Activated naive CD4-positive, alpha-beta T cell treated with anti-CD3 and anti-CD28 coated beads for 36 hours (primary cell): ENCODE measurements at regions of chr22 and their contacts with region 1.

Region 1: DNA sequence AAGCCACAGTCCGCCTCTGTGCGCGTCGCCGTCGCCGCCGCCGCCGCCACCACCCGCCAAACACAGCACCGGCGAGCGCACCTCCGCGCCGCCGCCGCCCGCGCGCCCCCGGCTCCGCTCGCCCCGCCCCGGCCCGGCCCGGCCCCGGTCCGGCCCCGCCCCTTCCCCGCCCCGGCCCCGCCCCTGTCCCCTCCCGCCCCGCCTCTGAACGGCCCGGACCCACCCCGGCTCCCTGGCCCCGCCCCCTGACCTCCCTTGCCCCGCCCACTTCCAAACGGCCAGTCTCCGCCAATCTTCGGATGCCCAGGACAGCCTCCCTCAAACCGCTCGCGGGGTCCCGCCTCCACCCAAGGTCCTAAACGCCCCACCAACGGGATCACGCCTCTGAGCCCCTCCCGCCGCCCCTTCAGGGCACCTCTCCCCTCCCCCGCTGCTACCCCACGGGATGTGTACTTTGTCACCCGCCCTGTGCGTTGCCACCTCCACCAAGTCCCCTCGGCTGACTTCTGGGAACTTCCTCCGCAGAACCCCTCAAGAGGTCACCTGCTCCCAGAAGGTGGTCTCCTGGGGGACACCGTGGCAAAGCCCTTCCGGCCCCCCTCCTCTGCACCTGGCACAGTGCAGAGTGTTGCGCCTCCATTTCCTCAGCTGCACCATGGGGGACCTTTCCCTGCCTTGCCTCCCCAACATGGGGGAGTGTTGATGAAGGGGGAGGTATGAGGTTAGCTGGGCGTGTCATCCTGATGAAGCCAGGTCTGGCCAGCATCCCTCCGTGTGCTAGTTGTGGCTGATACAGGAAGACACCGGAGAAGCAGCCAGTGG is at the start of gene KIAA0930:
- DNase-seq: peak; percentile 82
- H3K4me3 Mint-ChIP-seq: peak within 1 kb of the TSS; percentile 87
- H3K27ac Mint-ChIP-seq: peak within 1 kb of the TSS; percentile 53
- H3K4me1 Mint-ChIP-seq: peaks cover 28% of the 10 kb centered on the region
- H3K27me3 Mint-ChIP-seq: no peaks in the 10 kb centered on the region
- total RNA-seq, gene KIAA0930: 16.6 to 19.5 TPM

Region 2: DNA sequence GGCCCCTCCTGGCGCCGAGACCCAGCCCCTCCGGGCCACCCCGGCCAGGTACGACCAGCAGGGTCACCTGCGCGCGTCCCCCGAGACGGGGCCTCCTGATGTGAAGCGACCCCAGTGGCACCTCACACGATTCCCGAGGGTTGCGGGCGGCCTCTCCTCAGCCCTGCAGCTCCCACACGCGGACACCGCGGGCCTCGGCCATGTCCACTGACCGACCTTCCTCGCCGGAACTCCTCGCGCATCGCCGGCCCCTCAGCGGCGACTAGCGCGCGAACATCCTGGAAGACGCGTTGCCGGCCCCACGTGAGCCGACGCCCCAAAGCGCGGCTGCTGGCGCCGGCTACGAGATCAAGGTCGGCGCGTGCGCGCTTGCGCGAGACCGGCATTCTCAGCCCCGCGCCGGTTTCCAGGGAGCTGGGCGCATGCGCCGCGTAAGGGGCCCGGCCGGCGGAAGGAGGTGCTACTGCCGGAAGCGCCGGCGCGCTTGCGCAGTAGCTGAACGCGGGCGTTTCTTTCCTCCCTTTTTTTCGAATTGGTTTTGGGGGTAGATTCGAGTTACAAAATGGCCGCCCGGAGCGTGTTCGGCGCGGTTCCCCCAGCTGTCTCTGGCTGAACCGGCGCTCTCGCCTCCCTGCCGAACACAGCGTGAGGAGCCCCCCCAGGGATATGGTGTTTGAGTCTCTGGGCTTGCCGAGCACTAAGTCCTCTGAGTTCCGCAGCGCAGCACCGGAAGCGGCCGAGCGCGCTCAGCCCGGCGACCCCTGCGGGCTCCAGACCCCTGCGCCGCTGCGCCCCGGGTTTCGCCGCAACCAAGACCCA is 77.4 kb before region 1 on chr22 and contains the start of gene NUP50:
- CTCF ChIA-PET with region 1: no interaction called
- intact Hi-C with region 1: loop called (anchors 2 kb)
- DNase-seq: peak; percentile 95
- H3K4me3 Mint-ChIP-seq: peak within 1 kb of the TSS; percentile 84
- H3K27ac Mint-ChIP-seq: peak within 1 kb of the TSS; percentile 96
- H3K4me1 Mint-ChIP-seq: peaks cover 61% of the 10 kb centered on the region
- H3K27me3 Mint-ChIP-seq: no peaks in the 10 kb centered on the region
- total RNA-seq, gene NUP50: 151 to 154 TPM

Region 3: GRCh38 chr22:45254789-45255278 is 13.8 kb after region 1 on chr22:
- CTCF ChIA-PET with region 1: no interaction called
- intact Hi-C with region 1: no loop called
- DNase-seq: peak; percentile 37
- H3K4me3 Mint-ChIP-seq: no peak overlapping the region
- H3K27ac Mint-ChIP-seq: no peak overlapping the region
- H3K4me1 Mint-ChIP-seq: peaks cover 7% of the 10 kb centered on the region
- H3K27me3 Mint-ChIP-seq: no peaks in the 10 kb centered on the region

Region 4: DNA sequence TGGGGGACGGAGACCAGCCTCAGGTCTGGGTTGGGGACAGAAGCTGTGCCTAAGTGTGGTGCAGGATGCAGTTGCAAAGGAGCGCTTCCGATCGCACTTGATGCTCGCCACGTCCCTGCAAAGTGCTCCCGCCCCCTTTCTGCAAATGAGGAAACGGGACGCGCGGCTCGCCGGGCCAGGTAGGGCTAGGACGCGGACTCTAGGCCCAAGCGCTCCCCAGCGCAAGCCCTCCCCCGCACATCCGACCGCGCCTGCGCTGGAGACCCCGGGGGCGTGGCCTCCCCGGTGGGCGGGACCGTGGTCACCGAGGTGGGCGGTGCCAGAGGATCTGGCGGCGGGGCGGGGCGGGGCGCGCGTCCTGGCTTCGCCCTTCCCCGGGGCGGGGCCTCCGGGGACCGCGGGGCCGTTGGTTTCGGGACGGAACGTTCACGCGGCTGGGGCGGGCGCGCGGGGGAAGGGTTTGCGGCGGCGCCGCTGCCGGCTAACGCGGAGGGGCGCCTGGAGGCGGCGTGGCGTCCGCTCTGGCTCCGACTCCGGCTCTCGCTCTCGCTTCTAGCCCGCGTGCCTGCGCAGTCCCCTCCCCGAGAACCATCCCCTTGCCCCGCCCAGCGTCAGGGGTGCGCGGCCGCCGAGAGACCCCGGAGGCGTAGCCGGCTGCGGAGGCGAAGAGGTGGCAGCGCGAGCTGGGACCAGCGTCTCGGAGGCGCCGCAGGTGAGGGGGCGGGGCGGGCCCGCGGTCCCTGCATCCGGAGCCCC is 68.6 kb after region 1 on chr22 and contains the start of gene FAM118A:
- CTCF ChIA-PET with region 1: no interaction called
- intact Hi-C with region 1: loop called (anchors 1 kb)
- DNase-seq: peak; percentile 94
- H3K4me3 Mint-ChIP-seq: peak within 1 kb of the TSS; percentile 79
- H3K27ac Mint-ChIP-seq: peak within 1 kb of the TSS; percentile 87
- H3K4me1 Mint-ChIP-seq: peaks cover 45% of the 10 kb centered on the region
- H3K27me3 Mint-ChIP-seq: no peaks in the 10 kb centered on the region
- total RNA-seq, gene FAM118A: 62.2 to 66.9 TPM